Activated CD8-positive, alpha-beta T cell treated with anti-CD3 and anti-CD28 coated beads for 36 hours (primary cell): ENCODE measurements at regions of chr1 and their contacts with region 1.

Region 1: GRCh38 chr1:155978325-155978972 is at the start of gene ARHGEF2:
- DNase-seq: peak; percentile 93
- ATAC-seq: peak; percentile 68
- H3K4me3 Mint-ChIP-seq: peak within 1 kb of the TSS; percentile 98
- H3K27ac Mint-ChIP-seq: peak within 1 kb of the TSS; percentile 94
- H3K4me1 Mint-ChIP-seq: peaks cover 67% of the 10 kb centered on the region
- H3K27me3 Mint-ChIP-seq: no peaks in the 10 kb centered on the region
- CTCF ChIP-seq: peak; percentile 19
- total RNA-seq, gene ARHGEF2: 147 to 150 TPM

Region 2: DNA sequence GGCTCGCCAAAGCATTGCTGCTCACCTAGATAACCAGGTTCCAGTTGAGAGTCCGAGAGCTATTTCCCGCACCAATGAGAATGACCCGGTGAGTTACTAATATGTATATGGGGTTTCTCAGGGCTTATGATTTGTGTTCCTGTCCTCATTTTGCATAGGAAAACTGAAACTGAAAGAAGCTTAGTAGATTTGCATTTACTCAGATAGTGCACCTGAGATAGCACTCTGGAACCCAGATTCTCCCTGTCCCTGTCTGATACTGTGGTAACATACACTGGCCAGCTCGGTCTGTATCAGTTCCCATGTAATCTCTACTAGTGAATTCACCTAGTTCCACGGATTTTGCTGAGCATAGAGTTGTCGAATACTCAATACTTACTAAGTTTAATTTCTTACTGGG is 261.4 kb before region 1 on chr1:
- CTCF ChIA-PET with region 1: no interaction called
- POLR2A ChIA-PET with region 1: no interaction called
- intact Hi-C with region 1: no loop called
- DNase-seq: no peak
- ATAC-seq: no peak
- H3K4me3 Mint-ChIP-seq: no peak overlapping the region
- H3K27ac Mint-ChIP-seq: no peak overlapping the region
- H3K4me1 Mint-ChIP-seq: peaks cover 9% of the 10 kb centered on the region
- H3K27me3 Mint-ChIP-seq: no peaks in the 10 kb centered on the region
- CTCF ChIP-seq: no peak

Region 3: GRCh38 chr1:155801149-155801548 is 177.3 kb before region 1 on chr1:
- CTCF ChIA-PET with region 1: no interaction called
- POLR2A ChIA-PET with region 1: no interaction called
- intact Hi-C with region 1: no loop called
- DNase-seq: no peak
- ATAC-seq: peak; percentile 17
- H3K4me3 Mint-ChIP-seq: no peak overlapping the region
- H3K27ac Mint-ChIP-seq: peak overlapping the region; percentile 75
- H3K4me1 Mint-ChIP-seq: peaks cover 5% of the 10 kb centered on the region
- H3K27me3 Mint-ChIP-seq: no peaks in the 10 kb centered on the region
- CTCF ChIP-seq: no peak

Region 4: GRCh38 chr1:155946633-155947219 is 31.7 kb before region 1 on chr1:
- CTCF ChIA-PET with region 1: interaction called, 121 read pairs
- POLR2A ChIA-PET with region 1: interaction called, 128 read pairs
- intact Hi-C with region 1: loop called (anchors 2 kb)
- DNase-seq: no peak
- ATAC-seq: peak; percentile 37
- H3K4me3 Mint-ChIP-seq: peak overlapping the region; percentile 55
- H3K27ac Mint-ChIP-seq: peak overlapping the region; percentile 88
- H3K4me1 Mint-ChIP-seq: peaks cover 52% of the 10 kb centered on the region
- H3K27me3 Mint-ChIP-seq: no peaks in the 10 kb centered on the region
- CTCF ChIP-seq: no peak

Region 5: DNA sequence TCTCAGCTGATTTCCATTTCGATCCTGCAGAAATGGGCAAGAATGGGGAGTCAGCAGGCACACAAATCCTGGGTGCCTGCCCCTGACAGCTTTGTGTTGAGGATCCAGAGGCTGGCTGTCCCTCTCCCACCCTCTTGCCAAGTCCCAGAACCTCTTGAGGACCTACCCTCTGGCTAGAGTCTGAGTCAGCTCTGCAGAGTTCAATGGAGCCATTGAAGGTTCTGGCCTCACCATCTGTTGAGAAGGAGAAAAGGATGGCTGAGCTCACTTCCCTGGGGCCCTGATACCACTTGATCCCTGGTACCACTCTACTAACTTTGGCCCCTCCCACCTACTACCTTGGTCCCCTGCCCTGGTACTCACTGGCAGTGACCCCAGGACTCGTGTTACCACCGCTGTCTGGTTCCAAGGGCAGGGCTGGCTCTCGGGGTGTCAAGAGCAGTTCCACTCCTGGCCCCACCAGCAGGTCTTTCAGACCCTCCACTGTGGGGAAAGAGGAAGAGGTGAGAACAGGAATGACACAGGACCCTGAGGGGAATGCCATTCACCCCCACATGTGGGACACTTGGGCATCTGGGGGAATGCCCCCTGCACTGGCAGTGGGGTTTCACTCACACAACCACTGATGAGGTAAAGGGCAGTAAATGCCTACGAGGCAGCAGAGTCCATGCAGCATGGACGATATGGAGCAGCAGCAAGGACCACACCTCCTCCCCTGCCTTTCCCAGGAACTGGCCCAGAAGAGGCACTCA is 26.5 kb before region 1 on chr1:
- CTCF ChIA-PET with region 1: interaction called, 13 read pairs
- POLR2A ChIA-PET with region 1: interaction called, 128 read pairs
- intact Hi-C with region 1: loop called (anchors 2 kb)
- DNase-seq: no peak
- ATAC-seq: no peak
- H3K4me3 Mint-ChIP-seq: no peak overlapping the region
- H3K27ac Mint-ChIP-seq: peak overlapping the region; percentile 30
- H3K4me1 Mint-ChIP-seq: peaks cover 18% of the 10 kb centered on the region
- H3K27me3 Mint-ChIP-seq: no peaks in the 10 kb centered on the region
- CTCF ChIP-seq: no peak